ENCODE measurements at regions of chr14 and their contacts with region 1.

Region 1: DNA sequence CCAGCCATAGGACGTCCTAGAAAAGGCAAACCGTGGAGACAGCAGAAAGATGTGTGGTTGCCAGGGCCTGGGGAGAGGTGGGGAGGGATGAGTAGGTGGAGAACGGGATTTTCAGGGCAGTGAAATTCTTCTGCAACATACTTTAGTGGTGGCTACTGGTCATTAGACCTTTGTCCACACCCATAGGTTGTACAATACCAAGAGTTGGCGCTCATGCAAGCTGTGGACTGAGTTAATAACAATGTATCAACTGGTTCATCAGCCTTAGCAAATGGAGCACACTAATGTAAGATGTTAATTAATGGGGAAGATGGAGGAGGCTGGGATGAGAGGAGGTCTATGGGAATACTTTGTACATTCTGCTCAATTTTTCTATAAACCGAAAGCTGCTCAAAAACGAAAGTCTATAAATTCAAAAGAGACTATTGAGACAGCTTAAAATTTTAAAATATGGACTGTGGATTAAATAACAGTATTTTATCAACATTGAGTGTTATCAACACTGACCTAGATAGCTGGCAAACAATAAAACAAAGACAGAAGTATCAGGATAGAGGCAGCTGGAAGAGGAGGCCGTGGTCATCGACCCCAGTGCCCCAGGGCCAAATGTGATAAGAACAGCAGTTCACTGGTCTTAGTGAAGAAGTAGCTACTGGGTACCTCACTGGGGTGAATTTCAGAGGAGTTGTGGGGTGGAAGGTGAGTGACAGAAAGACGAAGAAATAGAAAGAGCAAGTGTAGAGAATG is 90.9 kb downstream of the SYNE3 start:
- DNase-seq: no peak
- H3K4me3 ChIP-seq: no peak overlapping the region
- H3K27ac ChIP-seq: no peak overlapping the region
- H3K4me1 ChIP-seq: no peaks in the 10 kb centered on the region
- H3K27me3 ChIP-seq: no peaks in the 10 kb centered on the region
- CTCF ChIP-seq: no peak
- EP300 ChIP-seq: no peak
- POLR2A ChIP-seq: no peak
- RAD21 ChIP-seq: no peak

Region 2: GRCh38 chr14:95413289-95414215 is 12.0 kb before region 1 on chr14:
- CTCF ChIA-PET with region 1: interaction called, 25 read pairs
- POLR2A ChIA-PET with region 1: no interaction called
- DNase-seq: no peak
- H3K4me3 ChIP-seq: no peak overlapping the region
- H3K27ac ChIP-seq: no peak overlapping the region
- H3K4me1 ChIP-seq: peaks cover 0 to 6% (median 2%) of the 10 kb centered on the region in 4 experiments; a peak in 2 of 7 replicates
- H3K27me3 ChIP-seq: no peaks in the 10 kb centered on the region; a peak in 1 of 7 replicates
- CTCF ChIP-seq: no peak
- EP300 ChIP-seq: no peak
- POLR2A ChIP-seq: no peak
- RAD21 ChIP-seq: no peak

Measured in H1 (cell line).